ENCODE measurements at regions of chrX and their contacts with region 1.

Region 1: GRCh38 chrX:153971450-153972367 is at the start of gene HCFC1:
- DNase-seq: peak; percentile 92
- H3K4me3 Mint-ChIP-seq: peak within 1 kb of the TSS; percentile 95
- H3K27ac Mint-ChIP-seq: peak within 1 kb of the TSS; percentile 100
- H3K4me1 Mint-ChIP-seq: peaks cover 29% of the 10 kb centered on the region
- H3K27me3 Mint-ChIP-seq: no peaks in the 10 kb centered on the region
- CTCF ChIP-seq: no peak
- total RNA-seq, gene HCFC1: 40.3 and 44.5 TPM in 2 replicates

Region 2: DNA sequence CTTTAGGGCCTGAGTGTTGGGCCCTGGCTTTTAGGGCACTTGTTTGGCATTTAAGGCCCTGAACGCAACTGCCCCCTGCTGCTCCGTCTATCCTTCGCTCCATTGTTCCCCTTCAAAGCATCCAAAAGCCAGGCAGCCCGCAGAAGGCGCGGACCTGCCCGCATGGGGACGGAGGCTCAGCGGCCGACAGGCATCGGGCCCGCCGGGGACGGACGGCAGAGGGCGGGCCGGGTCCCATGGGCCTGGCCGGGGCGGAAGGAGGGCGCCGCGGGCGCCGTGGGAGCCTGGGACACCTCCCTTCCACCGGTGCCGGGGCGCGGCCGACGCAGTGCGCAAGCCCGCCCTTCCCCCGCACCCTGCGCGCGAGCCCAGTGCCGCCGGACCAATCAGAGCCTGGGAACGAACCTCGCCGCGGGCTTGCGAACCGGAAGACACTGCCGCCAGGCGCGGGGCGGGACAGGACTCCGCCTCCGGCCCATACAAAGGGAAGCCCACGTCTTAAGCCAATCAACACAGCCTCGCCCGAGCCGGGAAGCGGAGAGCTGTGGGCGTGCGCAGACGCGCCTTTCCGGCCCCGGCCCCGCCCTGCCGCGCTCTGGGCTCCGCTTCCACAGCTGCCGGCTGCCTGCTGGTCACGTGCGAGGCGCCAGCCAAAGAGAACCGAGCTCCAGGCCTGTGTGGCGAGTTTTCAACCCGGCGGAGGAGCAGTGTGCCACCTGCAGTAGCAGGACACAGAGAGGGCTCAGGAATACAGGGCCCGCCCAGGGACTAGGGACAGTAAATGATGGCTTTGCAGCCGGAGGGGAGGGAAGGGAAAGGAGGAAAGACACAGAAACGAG is 43.6 kb before region 1 on chrX:
- CTCF ChIA-PET with region 1: no interaction called
- POLR2A ChIA-PET with region 1: interaction called, 12 read pairs
- intact Hi-C with region 1: no loop called
- DNase-seq: peak; percentile 95
- H3K4me3 Mint-ChIP-seq: peak overlapping the region; percentile 79
- H3K27ac Mint-ChIP-seq: peak overlapping the region; percentile 74
- H3K4me1 Mint-ChIP-seq: peaks cover 1% of the 10 kb centered on the region
- H3K27me3 Mint-ChIP-seq: no peaks in the 10 kb centered on the region
- CTCF ChIP-seq: peak; percentile 10

Region 3: GRCh38 chrX:153947009-153947769 is 24.5 kb before region 1 on chrX:
- CTCF ChIA-PET with region 1: interaction called, 50 read pairs
- POLR2A ChIA-PET with region 1: interaction called, 3 read pairs
- intact Hi-C with region 1: no loop called
- DNase-seq: peak; percentile 84
- H3K4me3 Mint-ChIP-seq: no peak overlapping the region
- H3K27ac Mint-ChIP-seq: no peak overlapping the region
- H3K4me1 Mint-ChIP-seq: no peaks in the 10 kb centered on the region
- H3K27me3 Mint-ChIP-seq: no peaks in the 10 kb centered on the region
- CTCF ChIP-seq: peak; percentile 92

Region 4: GRCh38 chrX:153953342-153953830 is 18.3 kb before region 1 on chrX:
- CTCF ChIA-PET with region 1: interaction called, 50 read pairs
- POLR2A ChIA-PET with region 1: interaction called, 3 read pairs
- intact Hi-C with region 1: no loop called
- DNase-seq: peak; percentile 61
- H3K4me3 Mint-ChIP-seq: no peak overlapping the region
- H3K27ac Mint-ChIP-seq: no peak overlapping the region
- H3K4me1 Mint-ChIP-seq: no peaks in the 10 kb centered on the region
- H3K27me3 Mint-ChIP-seq: no peaks in the 10 kb centered on the region
- CTCF ChIP-seq: peak; percentile 96

Region 5: DNA sequence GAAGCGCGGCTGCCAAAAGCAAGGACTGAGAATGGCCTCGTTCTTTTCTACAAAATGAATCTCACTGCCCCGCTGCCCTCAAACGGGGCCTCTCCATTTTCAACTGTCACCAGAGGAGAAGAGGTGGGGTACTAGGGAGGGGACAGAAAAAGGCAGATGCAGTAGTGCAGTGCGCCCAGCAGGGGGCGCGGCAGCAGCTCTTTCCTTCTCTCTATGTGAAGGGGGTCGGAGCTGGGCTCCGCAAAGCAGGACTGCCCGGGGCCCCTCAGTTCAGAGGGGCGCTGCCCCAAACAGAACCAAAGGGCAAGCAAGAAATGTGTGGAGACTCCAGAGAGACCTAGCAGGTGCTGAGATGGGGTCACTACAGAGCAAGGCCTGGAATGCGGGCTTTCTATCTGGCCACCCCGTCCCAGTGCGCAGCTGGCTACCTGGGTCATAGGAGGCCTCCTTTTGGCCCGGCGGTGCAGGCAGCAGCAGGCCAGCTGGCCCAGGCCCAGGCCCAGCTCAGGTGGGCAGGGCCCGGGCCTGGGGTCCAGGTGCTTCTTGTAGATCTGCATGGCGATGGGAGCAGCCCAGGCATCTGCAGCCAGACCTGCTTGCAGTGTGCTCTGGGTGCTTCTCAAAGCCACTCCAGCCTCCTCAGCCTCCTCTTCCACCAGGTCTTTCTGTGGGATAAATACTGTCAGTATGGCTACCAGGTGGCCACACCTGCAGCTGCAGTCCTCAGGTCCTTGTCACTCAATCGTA is 42.1 kb after region 1 on chrX:
- CTCF ChIA-PET with region 1: interaction called, 15 read pairs
- POLR2A ChIA-PET with region 1: interaction called, 15 read pairs
- intact Hi-C with region 1: no loop called
- DNase-seq: peak; percentile 32
- H3K4me3 Mint-ChIP-seq: no peak overlapping the region
- H3K27ac Mint-ChIP-seq: no peak overlapping the region
- H3K4me1 Mint-ChIP-seq: peaks cover 9% of the 10 kb centered on the region
- H3K27me3 Mint-ChIP-seq: peaks cover 12% of the 10 kb centered on the region
- CTCF ChIP-seq: peak; percentile 92

Region 6: DNA sequence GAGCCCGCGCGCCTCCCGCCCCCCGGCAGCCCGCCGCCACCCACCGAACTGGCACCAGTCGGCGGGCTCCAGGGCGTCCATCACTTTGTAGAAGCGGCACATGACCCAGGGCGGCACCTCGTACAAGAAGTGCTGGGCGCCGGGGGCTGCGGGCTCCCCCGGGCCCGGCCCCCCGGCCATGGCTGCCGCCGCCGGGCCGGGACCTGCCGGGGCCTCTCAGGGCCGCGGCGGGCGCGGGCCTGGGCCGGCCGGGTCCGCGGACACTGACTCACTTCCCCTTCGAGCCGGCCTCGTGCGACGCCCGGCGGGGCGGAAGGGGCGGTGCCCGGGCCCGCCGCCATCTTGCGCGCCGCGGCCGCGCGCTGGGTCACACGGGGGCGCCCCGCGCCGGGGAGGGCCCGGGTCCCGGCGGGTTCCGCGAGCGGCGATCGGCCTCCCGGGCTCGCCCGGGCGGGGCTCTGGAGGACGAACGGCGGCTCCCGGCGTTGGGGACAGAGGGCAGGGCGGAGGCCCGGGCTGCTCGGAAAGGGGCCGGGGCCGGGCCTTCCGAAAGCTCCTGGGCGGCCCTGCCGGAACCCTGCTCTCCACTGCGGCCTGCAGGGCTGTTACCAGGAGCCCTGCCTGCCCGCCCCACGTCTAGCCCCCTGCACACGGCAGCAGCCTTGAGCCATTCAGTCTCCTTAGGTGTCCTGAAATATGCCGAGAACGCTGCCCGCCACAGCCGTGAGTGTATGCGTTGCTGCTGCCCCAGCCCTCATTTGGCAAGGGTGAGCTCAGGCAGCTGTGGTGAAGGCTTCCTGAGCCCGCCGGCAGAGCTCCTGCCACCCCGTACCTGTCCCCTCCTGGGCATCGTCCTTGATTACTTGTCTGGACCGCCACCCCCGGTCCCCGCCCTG is 48.2 kb after region 1 on chrX and contains the start of gene IRAK1:
- CTCF ChIA-PET with region 1: interaction called, 15 read pairs
- POLR2A ChIA-PET with region 1: interaction called, 11 read pairs
- intact Hi-C with region 1: no loop called
- DNase-seq: peak; percentile 57
- H3K4me3 Mint-ChIP-seq: peak within 1 kb of the TSS; percentile 84
- H3K27ac Mint-ChIP-seq: peak within 1 kb of the TSS; percentile 95
- H3K4me1 Mint-ChIP-seq: no peaks in the 10 kb centered on the region
- H3K27me3 Mint-ChIP-seq: peaks cover 11% of the 10 kb centered on the region
- CTCF ChIP-seq: no peak
- total RNA-seq, gene IRAK1: 201 and 237 TPM in 2 replicates

Region 7: DNA sequence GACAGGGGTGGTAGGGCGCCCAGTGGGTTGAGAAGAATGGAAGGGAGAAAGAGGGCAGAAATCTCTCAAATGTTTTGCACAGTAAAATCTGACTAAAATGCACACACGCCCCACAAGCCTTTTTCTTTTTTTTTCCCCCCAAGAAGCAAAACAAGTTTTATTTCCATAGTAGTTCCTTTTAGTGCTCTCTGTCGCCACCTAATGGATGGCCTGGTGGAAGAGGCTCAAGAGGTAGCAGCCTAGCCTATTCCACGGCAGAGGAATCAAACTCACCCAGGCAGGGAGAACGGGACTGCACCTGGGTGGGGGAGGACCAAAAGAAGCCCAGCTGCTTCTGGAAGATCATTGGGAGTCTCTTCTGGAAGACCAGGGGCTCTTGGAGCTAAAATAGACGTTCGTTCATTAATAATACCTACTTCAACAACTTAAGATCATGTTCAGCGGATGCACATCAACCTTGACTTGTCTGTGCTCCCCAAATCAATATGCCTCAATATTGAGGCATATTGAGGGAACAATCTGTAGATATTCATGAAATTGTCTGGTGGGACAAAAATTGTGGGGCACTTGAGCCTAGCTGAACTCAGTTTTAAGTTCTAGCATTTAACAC is 79.6 kb after region 1 on chrX:
- CTCF ChIA-PET with region 1: no interaction called
- POLR2A ChIA-PET with region 1: interaction called, 3 read pairs
- intact Hi-C with region 1: loop called (anchors 2 kb)
- DNase-seq: peak; percentile 72
- H3K4me3 Mint-ChIP-seq: no peak overlapping the region
- H3K27ac Mint-ChIP-seq: no peak overlapping the region
- H3K4me1 Mint-ChIP-seq: peaks cover 6% of the 10 kb centered on the region
- H3K27me3 Mint-ChIP-seq: peaks cover 57% of the 10 kb centered on the region
- CTCF ChIP-seq: peak; percentile 49

Measured in MCF 10A (cell line).